Endothelial cell of umbilical vein (primary cell): ENCODE measurements at regions of chr22 and their contacts with region 1.

Region 1: DNA sequence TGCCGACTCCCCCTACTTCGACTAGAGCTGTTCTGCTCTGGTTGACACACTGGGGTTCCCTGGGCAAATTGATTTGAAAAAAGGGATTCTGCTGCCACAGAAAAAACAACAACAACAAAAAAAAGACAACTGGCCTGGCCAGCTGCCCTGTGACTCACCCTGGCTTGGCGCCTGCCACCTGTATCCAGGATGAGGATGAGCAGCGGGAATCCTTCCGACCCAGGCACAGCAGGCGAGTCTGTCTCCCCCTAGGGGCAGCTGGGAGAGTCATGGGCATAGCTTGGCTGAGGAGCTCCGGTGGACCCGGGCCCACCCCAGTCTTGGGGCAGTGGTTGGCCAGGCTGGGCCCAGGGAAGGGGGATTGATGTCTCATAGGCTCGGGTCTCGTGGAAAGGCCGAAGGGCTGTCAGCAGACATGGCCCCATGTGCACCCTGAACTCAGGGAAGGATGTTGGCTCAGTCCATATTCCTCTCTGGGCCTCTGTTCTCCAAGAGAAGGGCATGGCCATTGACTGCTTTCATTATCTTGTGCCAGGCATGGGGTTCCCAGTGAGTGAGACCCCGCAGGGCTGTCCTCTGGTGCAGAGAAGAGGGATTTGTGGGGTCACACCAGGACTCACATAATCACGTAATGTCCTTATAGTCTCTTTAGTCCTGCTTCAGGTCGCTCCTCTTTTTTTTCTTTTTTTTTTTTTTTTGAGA is 10.4 kb upstream of the SUN2 start:
- DNase-seq: peak; percentile 30
- H3K4me3 ChIP-seq: no peak overlapping the region
- H3K27ac ChIP-seq: no peak overlapping the region
- H3K4me1 ChIP-seq: no peaks in the 10 kb centered on the region
- H3K27me3 ChIP-seq: no peaks in the 10 kb centered on the region
- CTCF ChIP-seq: peak; percentile 84 to 90
- POLR2A ChIP-seq: no peak

Region 2: DNA sequence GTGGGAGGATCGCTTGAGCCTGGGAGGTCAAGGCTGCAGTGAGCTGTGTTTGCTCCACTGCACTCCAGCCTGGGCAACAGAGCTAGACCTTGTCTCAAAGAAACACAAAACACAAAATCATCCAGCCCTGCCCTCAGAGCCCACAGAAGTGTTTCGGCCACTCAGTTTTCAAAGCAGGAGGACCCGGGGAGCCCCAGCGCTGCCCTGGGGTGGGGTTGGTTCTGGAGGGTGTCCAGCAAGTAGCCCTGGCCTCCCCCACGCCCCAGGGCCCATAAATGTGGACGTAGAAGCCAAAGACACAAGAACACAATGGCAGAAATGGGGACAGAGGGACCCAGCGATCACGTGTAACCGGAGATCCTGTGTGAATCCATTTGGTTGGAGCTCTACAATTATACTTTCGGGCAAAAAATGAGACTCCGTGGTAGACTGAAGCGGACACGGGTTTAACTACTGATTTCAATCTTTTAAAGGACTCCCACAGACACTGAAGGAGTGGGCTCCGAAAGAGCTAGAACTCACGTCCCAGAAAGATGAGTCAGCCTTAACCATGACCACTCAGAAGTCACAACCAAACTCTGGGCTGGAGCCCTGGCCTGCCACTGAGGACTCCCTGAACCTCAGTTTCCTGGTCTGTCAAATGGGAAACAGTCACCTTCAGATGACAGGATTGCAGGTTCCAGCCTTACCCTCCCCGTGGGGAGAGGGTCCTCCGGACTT is 1492.9 kb before region 1 on chr22:
- CTCF ChIA-PET with region 1: no interaction called
- POLR2A ChIA-PET with region 1: no interaction called
- dilution Hi-C with region 1: no loop called
- intact Hi-C with region 1: no loop called
- DNase-seq: no peak
- H3K4me3 ChIP-seq: no peak overlapping the region
- H3K27ac ChIP-seq: no peak overlapping the region
- H3K4me1 ChIP-seq: peaks cover 11% of the 10 kb centered on the region
- H3K27me3 ChIP-seq: no peaks in the 10 kb centered on the region
- CTCF ChIP-seq: no peak
- POLR2A ChIP-seq: no peak

Region 3: GRCh38 chr22:38051900-38052862 is 714.0 kb before region 1 on chr22:
- CTCF ChIA-PET with region 1: interaction called, 14 read pairs
- POLR2A ChIA-PET with region 1: no interaction called
- dilution Hi-C with region 1: no loop called
- intact Hi-C with region 1: no loop called
- DNase-seq: peak; percentile 74
- H3K4me3 ChIP-seq: no peak overlapping the region
- H3K27ac ChIP-seq: no peak overlapping the region
- H3K4me1 ChIP-seq: peaks cover 4% of the 10 kb centered on the region
- H3K27me3 ChIP-seq: peaks cover 0 to 2% of the 10 kb centered on the region in 2 experiments
- CTCF ChIP-seq: peak; percentile 79 to 88
- POLR2A ChIP-seq: no peak

Region 4: DNA sequence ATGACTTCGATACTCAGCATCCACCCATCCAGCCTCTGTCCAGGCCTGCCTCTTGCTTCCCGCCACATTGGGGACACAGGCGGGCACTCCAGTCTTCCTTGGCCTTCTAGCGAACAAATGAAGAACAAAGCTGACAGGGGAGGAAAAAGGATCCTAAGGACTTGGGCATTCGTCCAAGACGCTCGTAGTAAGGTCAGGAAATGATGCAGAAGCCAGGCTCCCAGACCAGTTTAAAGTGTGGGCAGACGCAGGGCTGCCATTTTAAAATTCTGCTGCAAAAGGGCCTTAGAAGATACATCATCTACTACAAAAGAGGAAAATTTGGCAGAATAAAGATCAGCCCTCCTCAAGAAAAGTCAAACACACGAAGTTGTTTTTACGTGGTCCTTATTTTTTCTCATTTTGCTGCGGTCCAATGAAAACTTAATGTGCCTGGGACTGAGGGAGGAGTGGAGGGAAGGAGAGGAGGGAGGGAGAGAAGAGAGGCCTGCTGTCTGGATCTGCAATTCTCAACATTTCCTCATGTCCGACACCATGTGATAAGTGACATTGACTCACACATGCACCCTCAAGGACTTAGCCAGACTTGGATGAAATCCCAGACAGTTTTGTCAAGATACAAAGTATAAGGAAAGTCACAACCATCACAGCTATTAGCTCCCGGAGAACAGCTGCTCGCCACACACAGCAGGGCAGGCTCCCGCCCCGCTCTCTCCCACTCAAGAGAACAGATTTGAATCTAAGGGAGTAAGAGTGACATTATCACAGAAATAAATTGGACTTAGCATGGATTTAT is 22.0 kb after region 1 on chr22:
- CTCF ChIA-PET with region 1: interaction called, 82 read pairs
- POLR2A ChIA-PET with region 1: no interaction called
- dilution Hi-C with region 1: no loop called
- intact Hi-C with region 1: no loop called
- DNase-seq: peak; percentile 70
- H3K4me3 ChIP-seq: no peak overlapping the region
- H3K27ac ChIP-seq: peak overlapping the region; percentile 72
- H3K4me1 ChIP-seq: peaks cover 16% of the 10 kb centered on the region
- H3K27me3 ChIP-seq: no peaks in the 10 kb centered on the region
- CTCF ChIP-seq: no peak
- POLR2A ChIP-seq: no peak

Region 5: GRCh38 chr22:38830026-38830844 is 64.0 kb after region 1 on chr22:
- CTCF ChIA-PET with region 1: interaction called, 198 read pairs
- POLR2A ChIA-PET with region 1: no interaction called
- dilution Hi-C with region 1: no loop called
- intact Hi-C with region 1: no loop called
- DNase-seq: no peak
- H3K4me3 ChIP-seq: no peak overlapping the region
- H3K27ac ChIP-seq: no peak overlapping the region
- H3K4me1 ChIP-seq: no peaks in the 10 kb centered on the region
- H3K27me3 ChIP-seq: no peaks in the 10 kb centered on the region
- CTCF ChIP-seq: no peak
- POLR2A ChIP-seq: no peak

Region 6: GRCh38 chr22:38872172-38872830 is 106.1 kb after region 1 on chr22 and contains the start of gene CBX6:
- CTCF ChIA-PET with region 1: interaction called, 131 read pairs
- POLR2A ChIA-PET with region 1: interaction called, 6 read pairs
- dilution Hi-C with region 1: no loop called
- intact Hi-C with region 1: loop called (anchors 2 kb)
- DNase-seq: peak; percentile 92
- H3K4me3 ChIP-seq: peak within 1 kb of the TSS; percentile 76 to 82 (median 79)
- H3K27ac ChIP-seq: peak within 1 kb of the TSS; percentile 21
- H3K4me1 ChIP-seq: peaks cover 17% of the 10 kb centered on the region
- H3K27me3 ChIP-seq: peaks cover 14 to 25% of the 10 kb centered on the region in 2 experiments
- CTCF ChIP-seq: no peak
- POLR2A ChIP-seq: peak; percentile 80
- total RNA-seq, gene CBX6: 60.9 and 62.6 TPM in 2 replicates

Region 7: DNA sequence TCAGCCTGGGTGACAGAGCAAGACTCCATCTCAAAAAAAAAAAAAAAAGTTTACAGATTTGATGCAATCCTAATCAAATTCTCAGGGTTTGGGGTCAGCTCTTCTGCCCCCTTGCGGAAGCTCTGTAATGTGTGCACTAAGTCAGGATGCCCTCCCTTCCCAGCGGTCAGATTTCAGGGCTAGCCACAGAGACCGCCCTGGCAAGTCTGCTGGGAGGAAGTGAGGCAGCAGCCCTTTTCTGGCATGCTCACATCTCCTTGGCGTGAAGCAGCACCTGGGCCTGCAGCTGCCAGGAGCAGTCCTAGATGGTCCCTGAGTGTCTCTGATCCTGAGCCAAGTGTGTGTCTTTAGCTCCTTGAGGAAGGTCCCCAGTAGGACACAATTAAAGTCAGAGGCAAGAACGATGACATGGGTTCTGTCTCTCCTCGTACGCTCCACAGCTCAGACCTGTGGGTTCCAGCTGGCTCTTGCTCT is 237.0 kb after region 1 on chr22:
- CTCF ChIA-PET with region 1: interaction called, 208 read pairs
- POLR2A ChIA-PET with region 1: interaction called, 5 read pairs
- dilution Hi-C with region 1: no loop called
- intact Hi-C with region 1: loop called (anchors 1 kb)
- DNase-seq: peak; percentile 83
- H3K4me3 ChIP-seq: no peak overlapping the region
- H3K27ac ChIP-seq: no peak overlapping the region
- H3K4me1 ChIP-seq: no peaks in the 10 kb centered on the region
- H3K27me3 ChIP-seq: no peaks in the 10 kb centered on the region
- CTCF ChIP-seq: peak; percentile 67 to 72
- POLR2A ChIP-seq: no peak

Region 8: GRCh38 chr22:39520054-39520891 is 754.0 kb after region 1 on chr22 and contains the start of gene ATF4:
- CTCF ChIA-PET with region 1: no interaction called
- POLR2A ChIA-PET with region 1: interaction called, 11 read pairs
- dilution Hi-C with region 1: no loop called
- intact Hi-C with region 1: no loop called
- DNase-seq: peak; percentile 98
- H3K4me3 ChIP-seq: peak within 1 kb of the TSS; percentile 59 to 96 (median 92)
- H3K27ac ChIP-seq: peak within 1 kb of the TSS; percentile 93
- H3K4me1 ChIP-seq: peaks cover 15% of the 10 kb centered on the region
- H3K27me3 ChIP-seq: no peaks in the 10 kb centered on the region
- CTCF ChIP-seq: no peak
- POLR2A ChIP-seq: peak; percentile 97
- total RNA-seq, gene ATF4: 312 and 324 TPM in 2 replicates